ENCODE measurements at regions of chr10 and their contacts with region 1.

Region 1: GRCh38 chr10:122342293-122343134 is 32.0 kb upstream of the PLEKHA1 start:
- DNase-seq: peak; percentile 68
- H3K4me3 Mint-ChIP-seq: no peak overlapping the region
- H3K27ac Mint-ChIP-seq: no peak overlapping the region
- H3K4me1 Mint-ChIP-seq: peaks cover 8% of the 10 kb centered on the region
- H3K27me3 Mint-ChIP-seq: peaks cover 3% of the 10 kb centered on the region

Region 2: GRCh38 chr10:122298598-122299301 is 43.8 kb before region 1 on chr10:
- CTCF ChIA-PET with region 1: interaction called, 15 read pairs
- POLR2A ChIA-PET with region 1: no interaction called
- intact Hi-C with region 1: loop called (anchors 1 kb)
- DNase-seq: peak; percentile 79
- H3K4me3 Mint-ChIP-seq: no peak overlapping the region
- H3K27ac Mint-ChIP-seq: no peak overlapping the region
- H3K4me1 Mint-ChIP-seq: peaks cover 7% of the 10 kb centered on the region
- H3K27me3 Mint-ChIP-seq: no peaks in the 10 kb centered on the region

Region 3: GRCh38 chr10:122551450-122551849 is 208.9 kb after region 1 on chr10:
- CTCF ChIA-PET with region 1: no interaction called
- POLR2A ChIA-PET with region 1: no interaction called
- intact Hi-C with region 1: loop called (anchors 5 kb)
- DNase-seq: peak; percentile 79
- H3K4me3 Mint-ChIP-seq: no peak overlapping the region
- H3K27ac Mint-ChIP-seq: peak overlapping the region; percentile 36
- H3K4me1 Mint-ChIP-seq: peaks cover 20% of the 10 kb centered on the region
- H3K27me3 Mint-ChIP-seq: no peaks in the 10 kb centered on the region